Cardiac septum (tissue), 1 donor: ENCODE measurements at regions of chr20 and their contacts with region 1.

Region 1: GRCh38 chr20:57440678-57441520 is 49.7 kb downstream of the RBM38 start:
- DNase-seq: peak; percentile 90

Region 2: GRCh38 chr20:57153238-57153905 is 287.5 kb before region 1 on chr20:
- intact Hi-C with region 1: loop called (anchors 10 kb)
- DNase-seq: no peak

Region 3: GRCh38 chr20:57469418-57470211 is 28.7 kb after region 1 on chr20:
- intact Hi-C with region 1: loop called (anchors 2 kb)
- DNase-seq: peak; percentile 27